Activated B cell treated with CpG ODN at 0.5 μM for 24 hours (primary cell): ENCODE measurements at regions of chr17 and their contacts with region 1.

Region 1: GRCh38 chr17:39754161-39754951 is 16.6 kb downstream of the GRB7 start:
- DNase-seq: peak; percentile 99
- ATAC-seq: peak; percentile 70
- H3K4me3 Mint-ChIP-seq: peak overlapping the region; percentile 77
- H3K27ac Mint-ChIP-seq: peak overlapping the region; percentile 97
- H3K4me1 Mint-ChIP-seq: peaks cover 64% of the 10 kb centered on the region
- H3K27me3 Mint-ChIP-seq: no peaks in the 10 kb centered on the region
- CTCF ChIP-seq: peak; percentile 41

Region 2: DNA sequence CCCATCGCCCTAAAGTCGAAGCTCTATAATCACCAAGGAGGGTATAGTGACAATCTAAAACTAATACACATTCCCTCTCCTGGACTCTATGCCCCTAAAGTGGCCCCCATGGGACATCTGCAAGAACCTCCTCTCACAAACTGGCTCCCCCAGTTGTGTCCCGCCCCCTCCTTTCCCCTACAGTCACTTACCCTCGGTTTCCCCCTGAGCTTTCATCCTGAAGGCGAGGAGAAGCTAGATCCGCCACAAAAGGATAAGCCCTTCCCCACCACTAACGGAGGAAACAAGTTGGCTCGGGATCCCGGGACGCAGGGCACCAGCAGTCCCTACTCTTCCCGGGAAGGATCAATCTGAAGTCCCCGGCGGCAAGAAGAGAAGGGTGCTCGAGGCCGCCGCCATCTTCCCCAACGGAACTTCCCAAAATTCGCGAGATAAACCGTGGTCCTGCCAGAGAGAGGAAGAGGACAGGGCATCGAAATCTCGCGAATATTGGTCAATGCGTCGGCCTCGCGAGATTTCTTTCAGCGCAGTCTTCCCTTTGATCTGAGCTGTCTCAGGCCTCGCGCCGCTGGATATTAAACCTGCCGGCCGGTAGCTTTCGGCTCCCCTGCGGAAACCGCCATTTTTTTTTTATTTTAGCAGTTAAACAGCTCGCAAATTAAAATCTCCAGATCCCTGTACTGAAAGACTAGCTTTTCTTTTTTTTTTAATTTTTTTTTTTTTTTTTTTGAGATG is 303.3 kb before region 1 on chr17 and contains the start of gene MED1:
- CTCF ChIA-PET with region 1: no interaction called
- POLR2A ChIA-PET with region 1: interaction called, 13 read pairs
- intact Hi-C with region 1: loop called (anchors 1 kb)
- DNase-seq: peak; percentile 76
- ATAC-seq: peak; percentile 97
- H3K4me3 Mint-ChIP-seq: peak within 1 kb of the TSS; percentile 98
- H3K27ac Mint-ChIP-seq: peak within 1 kb of the TSS; percentile 96
- H3K4me1 Mint-ChIP-seq: peaks cover 28% of the 10 kb centered on the region
- H3K27me3 Mint-ChIP-seq: no peaks in the 10 kb centered on the region
- CTCF ChIP-seq: no peak
- total RNA-seq, gene MED1: 59.2 and 64.3 TPM in 2 replicates

Region 3: DNA sequence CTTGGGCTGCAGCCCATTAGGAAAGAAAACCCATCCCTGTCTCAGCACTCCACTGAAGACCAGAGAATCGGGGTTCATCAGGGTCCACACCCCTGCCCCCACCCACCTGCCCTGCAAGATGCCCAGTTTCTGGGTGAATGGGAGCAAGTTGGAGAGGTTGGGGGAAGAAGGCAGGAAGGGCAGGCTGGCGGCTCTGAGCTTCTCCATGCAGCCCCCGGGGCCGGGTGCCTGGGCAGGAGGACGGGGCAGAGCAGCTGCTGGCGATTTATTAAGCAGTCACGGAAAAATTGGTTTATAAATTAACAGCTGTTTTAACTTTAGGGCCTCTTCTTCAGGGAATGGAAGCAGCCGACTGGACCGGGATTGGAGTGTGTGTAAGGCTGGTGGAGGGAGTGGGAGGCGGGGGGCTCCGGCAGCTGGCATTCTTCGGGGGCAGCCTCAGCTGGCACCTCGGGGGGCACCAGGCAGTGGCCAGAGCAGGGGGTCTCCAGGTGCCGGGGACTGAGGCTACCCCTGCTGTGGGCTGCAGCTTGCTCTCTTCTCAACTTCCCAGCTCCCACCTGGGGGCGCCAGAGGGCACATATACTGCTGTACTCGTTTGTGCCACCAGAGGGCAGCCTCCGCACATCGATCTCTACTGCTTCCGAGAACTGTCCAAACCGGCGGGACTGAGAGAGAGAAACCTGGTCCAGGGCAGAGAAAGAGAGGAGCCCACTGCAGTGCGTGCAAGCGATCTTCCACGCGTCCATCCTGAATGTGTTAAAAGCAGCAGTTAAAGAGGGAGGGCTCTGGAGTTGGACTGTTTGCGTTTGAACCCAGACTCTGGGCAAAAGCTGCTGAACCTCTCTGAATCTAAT is 132.6 kb before region 1 on chr17:
- CTCF ChIA-PET with region 1: interaction called, 17 read pairs
- POLR2A ChIA-PET with region 1: interaction called, 16 read pairs
- intact Hi-C with region 1: loop called (anchors 1 kb)
- DNase-seq: peak; percentile 92
- ATAC-seq: peak; percentile 77
- H3K4me3 Mint-ChIP-seq: peak overlapping the region; percentile 70
- H3K27ac Mint-ChIP-seq: peak overlapping the region; percentile 60
- H3K4me1 Mint-ChIP-seq: peaks cover 26% of the 10 kb centered on the region
- H3K27me3 Mint-ChIP-seq: peaks cover 16% of the 10 kb centered on the region
- CTCF ChIP-seq: peak; percentile 97

Region 4: DNA sequence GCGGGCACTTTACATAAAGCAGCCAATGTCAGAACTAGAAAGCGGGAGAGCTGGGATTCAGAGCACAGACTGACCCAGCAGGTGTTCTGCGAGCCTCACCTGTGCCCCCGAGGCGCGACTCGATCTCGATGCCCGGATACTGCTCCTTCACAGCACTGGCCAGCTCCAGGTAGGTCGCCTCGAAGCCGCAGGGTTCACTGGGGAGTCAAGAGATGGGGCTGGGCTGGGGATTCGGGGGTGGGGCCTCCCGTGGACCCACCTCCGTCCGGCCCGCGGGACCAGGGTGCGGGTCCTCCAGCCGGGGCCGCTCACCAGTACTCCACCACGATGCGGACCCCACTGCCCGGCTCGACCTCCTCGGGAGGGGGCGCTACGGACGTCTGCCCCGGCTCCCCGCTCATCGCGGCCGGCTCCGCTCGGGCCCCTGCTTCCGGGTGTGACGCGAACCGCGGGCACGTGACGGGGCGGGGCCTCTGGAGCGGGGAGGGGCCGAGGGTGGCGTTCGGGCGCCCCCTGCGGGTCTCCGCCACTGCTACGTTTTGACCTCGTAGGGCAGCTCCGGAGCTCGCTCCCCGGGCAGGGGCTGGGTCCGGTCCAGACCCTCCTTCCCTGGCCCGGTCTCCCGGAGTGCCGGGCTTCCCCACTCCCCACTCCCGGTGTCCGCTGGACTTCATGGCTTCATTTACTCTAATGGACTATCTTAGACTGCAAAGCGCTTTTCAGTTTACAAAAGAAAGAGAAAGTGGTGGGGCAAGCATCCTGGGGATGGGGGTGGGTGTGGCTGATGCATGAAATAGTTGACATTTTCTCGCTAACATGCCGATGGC is 24.0 kb before region 1 on chr17 and contains the start of gene MIEN1:
- CTCF ChIA-PET with region 1: interaction called, 9 read pairs
- POLR2A ChIA-PET with region 1: interaction called, 39 read pairs
- intact Hi-C with region 1: loop called (anchors 1 kb)
- DNase-seq: peak; percentile 99
- ATAC-seq: peak; percentile 91
- H3K4me3 Mint-ChIP-seq: peak within 1 kb of the TSS; percentile 88
- H3K27ac Mint-ChIP-seq: peak within 1 kb of the TSS; percentile 86
- H3K4me1 Mint-ChIP-seq: peaks cover 21% of the 10 kb centered on the region
- H3K27me3 Mint-ChIP-seq: no peaks in the 10 kb centered on the region
- CTCF ChIP-seq: peak; percentile 64
- total RNA-seq, gene MIEN1: 42.2 and 45.7 TPM in 2 replicates

Region 5: DNA sequence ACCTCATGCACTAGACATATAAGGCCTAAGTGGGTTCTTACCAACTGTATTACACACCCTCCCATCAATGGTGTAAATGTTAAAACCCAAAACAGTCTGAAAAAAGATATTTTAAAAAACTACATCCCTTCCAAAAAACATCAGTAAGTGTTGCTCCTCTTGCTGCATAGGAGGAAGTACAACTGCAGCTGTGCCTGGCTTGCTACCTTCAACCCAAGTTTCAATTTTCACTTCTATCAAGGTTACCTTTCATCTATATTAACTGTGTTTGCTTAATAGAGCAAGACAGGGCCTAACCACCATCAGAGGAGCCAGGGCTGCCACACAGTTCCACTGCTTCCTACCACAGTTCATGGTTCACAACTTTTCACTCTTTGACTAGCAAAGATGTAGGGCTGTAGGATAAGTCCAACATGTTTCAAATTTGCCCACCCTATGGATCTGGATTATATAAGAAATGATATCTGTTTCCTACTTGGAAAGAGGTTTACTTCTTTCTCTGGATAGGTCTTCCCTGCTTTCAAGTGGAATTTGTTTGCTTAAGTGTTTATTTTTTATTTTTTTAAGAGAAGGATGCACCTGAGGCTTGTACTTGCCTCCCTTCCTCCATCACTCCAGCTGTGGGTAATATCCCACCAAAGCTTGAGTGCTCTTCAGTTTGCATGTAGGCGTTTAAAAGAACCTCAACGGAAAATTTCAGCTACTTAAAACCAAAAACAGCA is 40.1 kb after region 1 on chr17:
- CTCF ChIA-PET with region 1: interaction called, 13 read pairs
- POLR2A ChIA-PET with region 1: interaction called, 136 read pairs
- intact Hi-C with region 1: loop called (anchors 1 kb)
- DNase-seq: no peak
- ATAC-seq: peak; percentile 94
- H3K4me3 Mint-ChIP-seq: peak overlapping the region; percentile 66
- H3K27ac Mint-ChIP-seq: peak overlapping the region; percentile 93
- H3K4me1 Mint-ChIP-seq: peaks cover 85% of the 10 kb centered on the region
- H3K27me3 Mint-ChIP-seq: no peaks in the 10 kb centered on the region
- CTCF ChIP-seq: no peak

Region 6: DNA sequence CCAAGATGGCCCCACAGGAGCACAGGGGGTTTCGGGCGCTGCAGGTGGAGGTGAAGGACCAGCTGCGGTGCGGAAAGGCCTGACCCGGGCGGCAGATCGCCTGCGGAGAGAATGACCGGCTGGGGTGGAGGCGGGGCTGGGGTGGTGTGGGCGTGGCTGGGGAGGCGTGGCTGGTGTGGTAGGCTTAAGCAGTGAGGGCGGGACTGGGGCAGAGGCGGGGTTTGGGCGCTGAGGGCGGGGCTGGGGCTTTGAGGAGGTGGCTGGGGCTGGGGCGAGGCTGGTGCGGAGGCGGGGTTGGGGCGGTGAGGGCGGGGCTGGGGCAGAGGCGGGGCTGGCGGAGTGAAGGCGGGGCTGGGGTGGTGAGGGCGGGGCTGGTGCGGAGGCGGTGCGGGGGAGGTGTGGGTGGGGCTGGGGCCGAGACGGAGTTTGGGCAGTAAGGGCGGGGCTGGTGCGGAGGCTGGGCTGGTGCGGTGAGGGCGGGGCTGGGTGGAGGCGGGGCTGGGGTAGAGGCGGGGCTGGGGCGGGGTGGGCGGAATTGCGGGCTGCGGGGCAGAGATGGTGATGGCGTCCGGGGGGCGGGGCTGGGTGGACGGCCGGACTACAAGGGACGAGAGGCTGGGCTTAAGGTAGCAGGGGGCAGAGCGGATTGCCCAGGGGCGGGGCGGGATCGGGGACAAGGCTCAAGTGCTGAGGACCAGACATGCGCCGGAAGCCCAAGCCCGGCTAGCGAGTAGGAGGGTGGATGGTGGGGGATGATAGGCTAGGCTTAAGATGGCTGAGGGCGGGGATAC is 198.5 kb after region 1 on chr17:
- CTCF ChIA-PET with region 1: interaction called, 3 read pairs
- POLR2A ChIA-PET with region 1: interaction called, 4 read pairs
- intact Hi-C with region 1: loop called (anchors 1 kb)
- DNase-seq: peak; percentile 88
- ATAC-seq: peak; percentile 85
- H3K4me3 Mint-ChIP-seq: peak overlapping the region; percentile 85
- H3K27ac Mint-ChIP-seq: peak overlapping the region; percentile 83
- H3K4me1 Mint-ChIP-seq: peaks cover 29% of the 10 kb centered on the region
- H3K27me3 Mint-ChIP-seq: no peaks in the 10 kb centered on the region
- CTCF ChIP-seq: no peak